ENCODE measurements at regions of chr7 and their contacts with region 1.

Region 1: GRCh38 chr7:130205084-130205947 is at the start of gene TMEM209:
- DNase-seq: peak; percentile 98
- H3K4me3 ChIP-seq: peak within 1 kb of the TSS; percentile 81
- H3K27ac ChIP-seq: peak within 1 kb of the TSS; percentile 59
- H3K4me1 ChIP-seq: peaks cover 9% of the 10 kb centered on the region
- CTCF ChIP-seq: no peak
- total RNA-seq, gene TMEM209: 18.1 and 21.1 TPM in 2 replicates

Region 2: GRCh38 chr7:130191791-130192190 is 13.5 kb before region 1 on chr7:
- CTCF ChIA-PET with region 1: interaction called, 3 read pairs
- POLR2A ChIA-PET with region 1: interaction called, 26 read pairs
- intact Hi-C with region 1: no loop called
- DNase-seq: no peak
- H3K4me3 ChIP-seq: no peak overlapping the region
- H3K27ac ChIP-seq: no peak overlapping the region
- H3K4me1 ChIP-seq: peaks cover 8% of the 10 kb centered on the region
- CTCF ChIP-seq: no peak

Region 3: DNA sequence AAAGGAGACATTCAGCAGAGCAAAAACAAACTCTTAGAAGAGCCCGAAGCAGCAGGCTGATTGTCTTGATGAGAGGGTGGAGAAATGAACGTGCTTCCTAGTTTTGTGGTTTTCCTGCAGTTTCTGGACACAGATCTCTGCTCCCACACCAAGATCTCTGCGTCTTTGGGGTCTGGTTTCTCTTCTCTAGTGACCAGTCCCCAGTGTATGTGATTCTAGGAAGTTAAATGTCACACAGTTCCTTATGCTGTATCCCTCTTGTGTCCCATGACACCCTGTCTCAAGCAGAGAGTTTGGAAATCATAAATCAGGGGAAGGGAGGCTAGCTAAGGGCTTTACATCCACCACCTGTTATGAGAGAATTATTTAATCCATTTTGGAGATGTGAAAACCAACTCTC is 584.1 kb after region 1 on chr7:
- CTCF ChIA-PET with region 1: no interaction called
- POLR2A ChIA-PET with region 1: no interaction called
- intact Hi-C with region 1: no loop called
- DNase-seq: no peak
- H3K4me3 ChIP-seq: no peak overlapping the region
- H3K27ac ChIP-seq: no peak overlapping the region
- H3K4me1 ChIP-seq: no peaks in the 10 kb centered on the region
- CTCF ChIP-seq: no peak

Measured in OCI-LY7 (cell line).